ENCODE measurements at regions of chr6 and their contacts with region 1.

Region 1: DNA sequence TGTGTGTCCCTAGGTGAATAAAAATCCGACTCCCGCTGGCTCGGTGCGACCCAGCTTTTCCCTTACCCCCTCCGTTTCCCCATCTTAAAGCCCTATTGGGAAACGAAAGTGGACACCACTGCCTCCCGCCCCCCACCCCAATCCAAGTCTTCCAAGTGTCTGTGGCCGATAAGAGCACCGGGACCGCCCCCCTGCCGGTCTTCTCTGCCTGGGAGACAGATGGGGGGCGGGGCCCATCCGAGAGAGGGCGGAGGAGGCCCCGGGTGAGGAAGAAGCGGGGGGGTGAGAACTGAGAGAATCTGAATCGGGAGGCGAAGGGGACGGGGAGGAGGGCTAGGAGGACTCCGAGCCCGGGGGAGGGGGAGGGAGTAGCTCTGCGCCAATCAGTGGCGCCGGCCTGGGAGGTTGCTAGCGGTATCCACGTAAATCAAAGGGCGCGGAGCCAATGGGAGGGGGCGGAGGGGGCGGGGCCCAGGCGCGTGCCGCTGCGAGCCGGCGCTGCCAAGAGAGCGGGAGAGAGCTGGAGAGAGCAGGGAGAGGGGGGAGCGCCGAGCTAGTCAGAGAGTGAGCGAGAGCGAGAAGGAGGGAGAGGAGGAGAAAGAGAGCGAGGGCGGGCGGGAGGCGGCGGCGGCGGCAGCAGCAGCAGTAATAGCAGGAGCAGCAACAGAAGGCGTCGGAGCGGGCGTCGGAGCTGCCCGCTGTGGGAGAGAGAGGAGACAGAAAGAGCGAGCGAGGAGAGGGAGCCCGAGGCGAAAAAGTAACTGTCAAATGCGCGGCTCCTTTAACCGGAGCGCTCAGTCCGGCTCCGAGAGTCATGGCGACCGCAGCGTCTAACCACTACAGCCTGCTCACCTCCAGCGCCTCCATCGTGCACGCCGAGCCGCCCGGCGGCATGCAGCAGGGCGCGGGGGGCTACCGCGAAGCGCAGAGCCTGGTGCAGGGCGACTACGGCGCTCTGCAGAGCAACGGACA is at the start of gene POU3F2:
- DNase-seq: peak; percentile 85
- H3K4me3 Mint-ChIP-seq: peak within 1 kb of the TSS; percentile 84
- H3K27ac Mint-ChIP-seq: peak within 1 kb of the TSS; percentile 52
- H3K4me1 Mint-ChIP-seq: peaks cover 20% of the 10 kb centered on the region
- H3K27me3 Mint-ChIP-seq: peaks cover 91% of the 10 kb centered on the region
- CTCF ChIP-seq: no peak
- total RNA-seq, gene POU3F2: 0.12 TPM in 1 of 2 replicates, not detected in the other

Region 2: GRCh38 chr6:98653179-98653578 is 181.2 kb before region 1 on chr6:
- CTCF ChIA-PET with region 1: no interaction called
- intact Hi-C with region 1: loop called (anchors 5 kb)
- DNase-seq: no peak
- H3K4me3 Mint-ChIP-seq: no peak overlapping the region
- H3K27ac Mint-ChIP-seq: no peak overlapping the region
- H3K4me1 Mint-ChIP-seq: peaks cover 8% of the 10 kb centered on the region
- H3K27me3 Mint-ChIP-seq: peaks cover 18% of the 10 kb centered on the region
- CTCF ChIP-seq: no peak

Region 3: GRCh38 chr6:98777762-98778161 is 56.6 kb before region 1 on chr6:
- CTCF ChIA-PET with region 1: interaction called, 4 read pairs
- intact Hi-C with region 1: loop called (anchors 5 kb)
- DNase-seq: no peak
- H3K4me3 Mint-ChIP-seq: no peak overlapping the region
- H3K27ac Mint-ChIP-seq: no peak overlapping the region
- H3K4me1 Mint-ChIP-seq: peaks cover 29% of the 10 kb centered on the region
- H3K27me3 Mint-ChIP-seq: peaks cover 13% of the 10 kb centered on the region
- CTCF ChIP-seq: no peak